Dendritic cell treated with granulocyte-macrophage colony-stimulating factor and Interleukin-4, amounts not matched to agents 40 ng/mL and 50 ng/mL, for 4 days (primary cell): ENCODE measurements at regions of chr3 and their contacts with region 1.

Region 1: DNA sequence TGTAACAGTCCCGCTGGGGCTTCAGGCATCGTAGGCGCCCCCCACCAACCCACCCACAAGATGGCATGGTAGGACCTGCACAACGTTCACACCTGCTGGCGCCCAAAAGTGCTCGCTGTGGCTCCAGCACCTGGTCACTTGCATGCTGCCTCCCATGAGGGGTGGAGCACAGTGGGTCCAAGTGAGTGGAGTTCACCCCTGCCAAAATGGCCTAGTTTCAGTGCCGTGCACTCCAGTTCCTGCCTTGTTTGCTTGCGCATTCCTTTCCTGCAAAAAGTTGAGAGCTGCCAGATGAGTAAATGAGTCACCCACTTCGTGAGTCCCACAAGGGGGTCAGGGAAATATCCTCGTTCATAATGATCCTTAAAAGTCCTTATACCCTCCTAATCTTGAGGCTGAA is 788.7 kb upstream of the DPPA4 start:
- H3K4me3 Mint-ChIP-seq: no peak overlapping the region
- H3K27ac Mint-ChIP-seq: no peak overlapping the region
- H3K4me1 Mint-ChIP-seq: no peaks in the 10 kb centered on the region
- H3K27me3 Mint-ChIP-seq: no peaks in the 10 kb centered on the region

Region 2: GRCh38 chr3:110178965-110179364 is 52.9 kb after region 1 on chr3:
- intact Hi-C with region 1: loop called (anchors 5 kb)
- H3K4me3 Mint-ChIP-seq: no peak overlapping the region
- H3K27ac Mint-ChIP-seq: no peak overlapping the region
- H3K4me1 Mint-ChIP-seq: no peaks in the 10 kb centered on the region
- H3K27me3 Mint-ChIP-seq: no peaks in the 10 kb centered on the region